ENCODE measurements at regions of chr12 and their contacts with region 1.

Region 1: DNA sequence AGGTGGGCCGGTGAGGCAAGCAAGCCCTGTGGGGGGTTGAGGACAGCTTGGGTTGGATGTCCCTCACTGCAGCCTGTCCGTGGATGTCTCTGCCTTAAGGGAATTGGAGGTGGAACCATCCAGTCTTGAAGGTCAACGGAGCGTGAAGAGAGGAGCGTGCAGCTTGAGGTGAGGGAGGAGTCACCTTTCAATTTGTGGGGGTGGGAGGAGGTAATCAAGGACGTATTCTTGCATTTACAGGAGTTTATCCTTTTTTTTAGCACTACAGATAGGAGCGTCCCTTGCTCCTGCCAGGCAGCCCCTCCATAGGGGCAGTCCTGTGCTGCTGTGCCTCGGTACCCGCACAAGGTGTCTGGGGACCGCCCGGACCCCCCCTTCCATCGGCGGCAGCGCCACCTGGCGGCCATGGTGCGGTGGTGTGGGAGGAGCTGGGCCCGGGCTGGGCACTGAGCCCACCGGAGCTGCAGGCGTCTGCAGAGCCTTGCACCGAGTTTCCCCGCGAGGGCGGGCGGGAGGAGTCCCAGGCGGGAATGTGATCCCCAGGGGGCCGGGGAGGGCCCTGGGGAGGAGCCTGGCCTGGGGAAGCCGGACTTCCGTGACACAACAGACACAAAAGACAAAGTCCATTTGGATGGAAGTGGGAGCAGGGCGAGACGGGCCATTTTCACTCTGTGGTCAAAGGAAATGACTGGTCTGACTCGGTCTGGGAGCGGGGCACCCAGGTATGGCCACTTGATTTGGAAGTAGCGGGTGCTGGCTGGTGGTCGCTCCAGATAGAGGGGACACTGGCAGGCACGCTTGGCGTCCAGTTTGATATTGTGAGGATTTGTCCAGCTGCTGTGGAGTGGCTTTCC is 923 bp downstream of the DNAJC22 start:
- DNase-seq: peak; percentile 93
- ATAC-seq: peak; percentile 79
- H3K4me3 Mint-ChIP-seq: peak overlapping the region; percentile 75
- H3K27ac Mint-ChIP-seq: no peak overlapping the region
- H3K4me1 Mint-ChIP-seq: peaks cover 24% of the 10 kb centered on the region
- H3K27me3 Mint-ChIP-seq: peaks cover 87% of the 10 kb centered on the region
- CTCF ChIP-seq: peak; percentile 97

Region 2: GRCh38 chr12:49304161-49304560 is 43.5 kb before region 1 on chr12:
- CTCF ChIA-PET with region 1: interaction called, 18 read pairs
- POLR2A ChIA-PET with region 1: no interaction called
- DNase-seq: no peak
- ATAC-seq: no peak
- H3K4me3 Mint-ChIP-seq: no peak overlapping the region
- H3K27ac Mint-ChIP-seq: no peak overlapping the region
- H3K4me1 Mint-ChIP-seq: no peaks in the 10 kb centered on the region
- H3K27me3 Mint-ChIP-seq: peaks cover 62% of the 10 kb centered on the region
- CTCF ChIP-seq: no peak

Region 3: GRCh38 chr12:49336645-49337584 is 10.7 kb before region 1 on chr12 and contains the start of gene C1QL4:
- CTCF ChIA-PET with region 1: interaction called, 234 read pairs
- POLR2A ChIA-PET with region 1: interaction called, 18 read pairs
- DNase-seq: peak; percentile 93
- ATAC-seq: peak; percentile 55
- H3K4me3 Mint-ChIP-seq: peak within 1 kb of the TSS; percentile 70
- H3K27ac Mint-ChIP-seq: no peak within 1 kb of the TSS
- H3K4me1 Mint-ChIP-seq: peaks cover 56% of the 10 kb centered on the region
- H3K27me3 Mint-ChIP-seq: peaks cover 99% of the 10 kb centered on the region
- CTCF ChIP-seq: peak; percentile 97
- total RNA-seq, gene C1QL4: 0.92 to 1.2 TPM (median 1.2 TPM) in 3 replicates

Region 4: DNA sequence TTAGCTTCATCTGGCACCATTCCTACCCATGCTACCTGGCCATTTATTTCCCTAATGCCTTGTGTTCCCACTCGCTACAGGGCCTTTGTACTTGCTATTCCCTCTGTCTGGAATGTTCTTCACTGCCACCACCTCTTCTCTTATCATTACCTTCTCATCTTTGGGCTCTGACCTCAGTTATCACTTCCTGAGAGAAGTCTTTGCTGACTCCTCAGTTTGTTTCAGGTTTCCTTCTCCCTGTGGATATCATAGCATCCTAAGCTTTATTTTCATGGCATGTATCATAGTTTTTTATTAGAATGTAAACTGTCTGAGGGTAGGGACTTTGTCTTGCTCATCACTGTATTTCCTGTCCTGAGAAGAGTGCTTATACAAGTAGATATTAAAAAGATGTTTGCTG is 49.4 kb after region 1 on chr12:
- CTCF ChIA-PET with region 1: interaction called, 10 read pairs
- POLR2A ChIA-PET with region 1: no interaction called
- DNase-seq: no peak
- ATAC-seq: no peak
- H3K4me3 Mint-ChIP-seq: no peak overlapping the region
- H3K27ac Mint-ChIP-seq: peak overlapping the region; percentile 4; the same call in 1 of the 2 replicates
- H3K4me1 Mint-ChIP-seq: peaks cover 24% of the 10 kb centered on the region
- H3K27me3 Mint-ChIP-seq: no peaks in the 10 kb centered on the region
- CTCF ChIP-seq: no peak

Region 5: GRCh38 chr12:49496417-49497360 is 149.1 kb after region 1 on chr12:
- CTCF ChIA-PET with region 1: interaction called, 12 read pairs
- POLR2A ChIA-PET with region 1: no interaction called
- DNase-seq: no peak
- ATAC-seq: no peak
- H3K4me3 Mint-ChIP-seq: no peak overlapping the region
- H3K27ac Mint-ChIP-seq: peak overlapping the region; percentile 48; the same call in 1 of the 2 replicates
- H3K4me1 Mint-ChIP-seq: no peaks in the 10 kb centered on the region
- H3K27me3 Mint-ChIP-seq: no peaks in the 10 kb centered on the region
- CTCF ChIP-seq: no peak

Region 6: GRCh38 chr12:49543914-49544815 is 196.6 kb after region 1 on chr12:
- CTCF ChIA-PET with region 1: interaction called, 34 read pairs
- POLR2A ChIA-PET with region 1: no interaction called
- DNase-seq: peak; percentile 47
- ATAC-seq: peak; percentile 41
- H3K4me3 Mint-ChIP-seq: peak overlapping the region; percentile 68
- H3K27ac Mint-ChIP-seq: no peak overlapping the region
- H3K4me1 Mint-ChIP-seq: peaks cover 32% of the 10 kb centered on the region
- H3K27me3 Mint-ChIP-seq: peaks cover 100% of the 10 kb centered on the region
- CTCF ChIP-seq: no peak

Region 7: DNA sequence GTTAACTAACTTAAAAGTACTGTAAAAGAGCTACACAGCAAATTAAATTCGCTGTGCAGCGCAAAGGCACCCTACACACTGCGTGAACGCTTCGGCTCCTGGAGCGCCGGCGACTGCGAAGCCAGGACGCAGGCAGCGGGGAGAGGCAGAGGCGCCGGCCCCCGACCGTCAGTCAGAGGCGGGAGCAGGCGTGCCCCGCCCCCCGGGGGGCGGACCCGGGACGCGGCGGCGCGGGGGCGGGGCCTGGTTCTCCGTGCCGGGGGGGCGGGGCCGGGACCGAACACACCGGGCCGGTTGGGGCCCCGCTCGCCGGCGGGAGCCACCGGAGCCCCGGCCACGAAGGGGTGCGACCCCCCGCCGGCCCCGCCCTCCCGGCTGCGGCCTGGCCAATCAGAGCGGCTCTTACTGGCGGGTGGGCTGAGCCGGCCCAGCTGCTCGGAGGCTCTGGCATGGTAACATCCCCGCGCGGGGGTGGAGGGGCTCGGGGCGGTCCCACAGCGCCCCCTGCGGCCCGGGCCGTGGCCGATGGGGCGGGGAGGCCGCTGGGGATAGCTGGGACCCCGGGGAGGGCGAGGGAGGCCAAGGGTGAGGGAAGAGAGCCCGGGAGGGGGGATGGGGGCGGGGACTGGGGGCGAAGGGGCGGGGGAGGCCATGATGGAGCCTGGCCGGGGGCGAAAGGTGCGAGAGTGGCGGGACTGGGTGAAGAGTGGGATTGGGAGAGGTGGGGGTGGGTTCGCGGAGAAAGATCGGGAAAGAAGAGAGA is 275.7 kb after region 1 on chr12 and contains the start of gene PRPF40B:
- CTCF ChIA-PET with region 1: interaction called, 15 read pairs
- POLR2A ChIA-PET with region 1: no interaction called
- DNase-seq: peak; percentile 92
- ATAC-seq: peak; percentile 84
- H3K4me3 Mint-ChIP-seq: peak within 1 kb of the TSS; percentile 90
- H3K27ac Mint-ChIP-seq: peak within 1 kb of the TSS; percentile 92
- H3K4me1 Mint-ChIP-seq: peaks cover 35% of the 10 kb centered on the region
- H3K27me3 Mint-ChIP-seq: no peaks in the 10 kb centered on the region
- CTCF ChIP-seq: peak; percentile 47; the same call in 1 of the 2 replicates
- total RNA-seq, gene PRPF40B: 38.0 to 46.0 TPM (median 40.5 TPM) in 3 replicates